Esophagus muscularis mucosa (tissue), 4 donors: ENCODE measurements at regions of chr3 and their contacts with region 1.

Region 1: DNA sequence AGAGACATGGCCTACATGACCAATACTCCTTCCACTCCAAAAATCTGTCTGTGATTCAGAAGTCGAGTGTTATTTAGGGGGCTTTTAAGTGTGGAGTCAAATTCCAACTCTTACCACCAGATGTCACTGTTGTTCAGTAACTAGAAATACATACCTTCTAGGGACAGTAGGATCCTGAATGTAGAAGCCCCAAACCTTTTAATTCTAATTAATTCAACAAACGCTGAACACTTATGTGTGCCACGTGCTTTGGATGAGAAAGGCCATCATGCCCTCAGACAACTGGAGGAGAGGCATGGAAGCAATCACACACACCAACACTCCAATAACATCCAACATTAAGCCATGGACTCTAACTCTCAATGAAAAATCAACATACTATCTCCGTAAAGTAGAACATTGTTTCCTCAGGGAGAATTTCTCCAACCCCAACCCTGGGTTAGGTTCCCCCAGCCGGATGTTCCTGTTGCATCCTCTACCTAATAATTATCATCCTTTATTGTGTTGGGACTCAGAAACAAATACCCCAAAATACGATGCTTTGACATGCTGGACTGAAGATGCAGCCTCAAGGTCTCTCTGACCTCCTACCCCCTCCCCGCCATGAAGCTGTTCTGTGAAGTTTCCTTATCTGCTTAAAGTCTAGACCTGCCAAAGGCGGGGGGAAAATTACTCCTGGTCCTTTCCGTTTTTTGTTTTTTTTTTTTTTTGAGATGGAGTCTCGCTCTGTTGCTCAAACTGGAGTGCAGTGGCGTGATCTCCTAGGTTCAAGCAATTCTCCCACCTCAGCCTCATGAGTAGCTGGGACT is 8.0 kb upstream of the CCDC13 start:
- DNase-seq: no peak
- H3K4me3 ChIP-seq: no peak overlapping the region
- H3K27ac ChIP-seq: peak overlapping the region; percentile 76 to 85 (median 79)
- H3K4me1 ChIP-seq: peaks cover 23 to 88% (median 73%) of the 10 kb centered on the region in 4 donors
- H3K27me3 ChIP-seq: no peaks in the 10 kb centered on the region
- CTCF ChIP-seq: peak; percentile 86 to 91 (median 87)
- EP300 ChIP-seq: no peak
- POLR2A ChIP-seq: no peak

Region 2: GRCh38 chr3:42547401-42547945 is 233.6 kb before region 1 on chr3:
- intact Hi-C with region 1: no loop called
- DNase-seq: no peak
- H3K4me3 ChIP-seq: no peak overlapping the region
- H3K27ac ChIP-seq: no peak overlapping the region
- H3K4me1 ChIP-seq: peaks cover 14 to 34% (median 29%) of the 10 kb centered on the region in 4 donors
- H3K27me3 ChIP-seq: peaks cover 0 to 4% (median 0%) of the 10 kb centered on the region in 4 donors
- CTCF ChIP-seq: peak; percentile 82 to 96 (median 94)
- EP300 ChIP-seq: no peak
- POLR2A ChIP-seq: no peak

Region 3: GRCh38 chr3:42831321-42831713 is 50.2 kb after region 1 on chr3:
- intact Hi-C with region 1: loop called (anchors 2 kb)
- DNase-seq: no peak
- H3K4me3 ChIP-seq: no peak overlapping the region
- H3K27ac ChIP-seq: no peak overlapping the region
- H3K4me1 ChIP-seq: peaks cover 0 to 12% (median 11%) of the 10 kb centered on the region in 4 donors
- H3K27me3 ChIP-seq: no peaks in the 10 kb centered on the region
- CTCF ChIP-seq: peak; percentile 78 to 90 (median 83)
- EP300 ChIP-seq: no peak
- POLR2A ChIP-seq: no peak

Region 4: DNA sequence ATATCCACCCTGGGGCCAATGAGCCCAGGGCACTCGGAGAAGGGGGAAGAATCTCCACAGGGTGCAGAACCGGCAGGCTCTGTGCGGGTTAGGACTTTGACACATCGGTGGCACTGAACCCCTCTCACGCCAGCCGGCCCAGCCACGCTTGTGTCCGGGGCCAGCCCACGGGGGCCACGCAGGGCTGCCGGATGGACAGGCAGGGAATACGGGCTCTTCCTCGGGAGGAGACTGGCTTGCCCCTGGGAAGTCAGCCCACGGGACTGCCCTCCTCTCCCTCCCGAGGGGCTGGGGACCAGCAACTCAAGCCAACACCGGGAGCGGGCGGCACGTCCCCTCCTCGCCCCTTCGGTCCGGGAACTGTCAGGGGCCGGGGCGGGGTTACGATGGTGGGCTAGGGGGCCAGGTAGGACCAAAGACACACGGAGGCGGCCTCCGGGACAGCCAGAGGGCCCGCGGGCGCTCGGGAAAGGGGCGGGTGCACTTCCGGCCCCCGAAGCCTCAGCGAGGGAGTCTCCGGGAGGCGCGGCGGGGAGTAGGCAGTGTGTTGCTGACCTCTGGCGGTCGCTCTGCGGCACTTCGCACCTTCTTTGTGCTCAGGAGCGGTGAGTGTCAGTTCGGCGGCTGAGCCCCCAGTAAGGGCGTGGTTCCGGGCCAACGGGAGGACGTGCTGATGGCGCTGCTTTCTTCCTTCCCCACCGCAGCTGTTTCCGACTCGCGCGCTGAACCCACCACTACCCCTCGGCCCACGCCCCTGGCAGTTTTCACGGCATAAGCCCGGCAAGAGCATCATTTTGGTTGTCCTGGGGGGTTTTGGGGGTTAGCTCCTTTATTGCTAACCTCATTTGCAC is 99.7 kb after region 1 on chr3:
- intact Hi-C with region 1: loop called (anchors 1 kb)
- DNase-seq: no peak
- H3K4me3 ChIP-seq: peak overlapping the region; percentile 60 to 64 (median 62)
- H3K27ac ChIP-seq: peak overlapping the region; percentile 76 to 80 (median 78)
- H3K4me1 ChIP-seq: peaks cover 7 to 12% (median 12%) of the 10 kb centered on the region in 4 donors
- H3K27me3 ChIP-seq: no peaks in the 10 kb centered on the region
- CTCF ChIP-seq: peak; percentile 94 to 97 (median 96)
- EP300 ChIP-seq: no peak
- POLR2A ChIP-seq: no peak

Region 5: DNA sequence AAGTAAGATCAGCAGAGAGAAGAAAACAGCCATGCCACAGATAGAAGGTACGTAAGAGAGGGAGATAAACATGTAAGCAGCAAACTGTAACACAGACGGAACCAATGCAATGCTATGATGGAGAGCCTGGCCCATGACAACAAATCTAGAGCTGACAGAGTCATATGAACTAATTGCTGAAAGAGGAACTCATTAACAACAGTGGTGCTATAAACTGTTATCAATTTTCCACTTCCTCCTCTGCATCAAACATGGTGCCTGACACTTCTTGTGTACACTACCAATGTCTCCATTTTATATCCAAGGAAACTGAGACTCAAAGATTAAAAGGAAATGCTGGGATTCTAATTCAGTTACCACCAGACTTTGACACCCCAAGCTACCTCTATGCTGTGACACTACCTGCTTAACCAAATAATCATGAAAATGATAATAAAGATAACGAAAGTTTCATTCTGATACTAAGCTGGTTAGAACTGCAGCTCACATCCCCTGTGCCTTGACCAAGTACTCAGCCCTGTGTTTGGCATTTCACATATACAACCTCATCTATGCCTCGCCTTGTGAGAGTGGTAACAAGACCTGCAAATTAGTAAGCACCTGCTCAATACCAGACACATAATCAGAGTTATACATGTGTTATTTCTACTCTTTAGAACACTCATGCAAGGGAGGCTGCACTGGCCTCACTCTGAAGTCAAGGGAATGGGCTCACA is 761.4 kb after region 1 on chr3:
- intact Hi-C with region 1: no loop called
- DNase-seq: no peak
- H3K4me3 ChIP-seq: no peak overlapping the region
- H3K27ac ChIP-seq: no peak overlapping the region
- H3K4me1 ChIP-seq: peaks cover 0 to 4% (median 2%) of the 10 kb centered on the region in 4 donors
- H3K27me3 ChIP-seq: no peaks in the 10 kb centered on the region
- CTCF ChIP-seq: no peak
- EP300 ChIP-seq: no peak
- POLR2A ChIP-seq: no peak